Endothelial cell of umbilical vein (primary cell): ENCODE measurements at regions of chr21 and their contacts with region 1.

Region 1: DNA sequence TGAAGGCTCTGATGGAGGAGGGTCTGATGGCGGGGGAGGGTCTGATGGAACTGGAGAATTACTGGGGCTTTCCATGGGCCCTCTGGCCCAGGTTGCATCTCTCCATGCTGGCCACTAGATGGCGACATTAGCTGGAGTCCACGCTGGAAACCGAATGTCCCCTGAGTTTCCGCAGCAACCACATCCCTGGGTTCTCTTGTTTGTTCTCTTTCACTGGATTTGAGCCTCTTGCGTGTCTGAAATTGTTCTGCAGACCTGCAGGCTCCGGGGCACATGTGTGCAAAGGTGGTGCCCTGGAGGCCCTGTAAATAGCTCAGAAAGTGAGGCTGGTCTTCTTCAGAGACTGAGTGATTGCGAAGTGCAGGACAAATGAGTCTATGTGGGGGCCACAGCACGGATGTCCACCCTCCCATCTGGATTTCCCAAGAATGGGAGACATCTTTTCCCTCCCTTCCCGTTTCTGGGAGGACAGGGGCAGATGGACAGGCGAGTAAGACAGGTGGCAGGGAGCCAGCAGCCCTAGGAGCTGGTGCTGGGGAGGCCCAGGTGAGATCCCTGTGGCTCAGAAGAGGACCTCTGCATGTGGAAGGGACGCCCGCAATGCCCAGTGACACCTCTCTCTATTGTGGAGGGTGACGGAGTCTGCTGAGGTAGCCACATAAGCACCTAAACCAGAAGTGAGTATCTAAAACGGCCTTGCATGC is 73.2 kb upstream of the ABCG1 start:
- DNase-seq: peak; percentile 42
- H3K4me3 ChIP-seq: no peak overlapping the region
- H3K27ac ChIP-seq: no peak overlapping the region
- H3K4me1 ChIP-seq: no peaks in the 10 kb centered on the region
- H3K27me3 ChIP-seq: peaks cover 0 to 2% of the 10 kb centered on the region in 2 experiments
- CTCF ChIP-seq: peak; percentile 83 to 92
- POLR2A ChIP-seq: no peak

Region 2: GRCh38 chr21:42220138-42220701 is 74.5 kb after region 1 on chr21:
- CTCF ChIA-PET with region 1: interaction called, 12 read pairs
- POLR2A ChIA-PET with region 1: no interaction called
- dilution Hi-C with region 1: no loop called
- intact Hi-C with region 1: no loop called
- DNase-seq: peak; percentile 91
- H3K4me3 ChIP-seq: peak overlapping the region; percentile 53 to 65 (median 63)
- H3K27ac ChIP-seq: peak overlapping the region; percentile 53
- H3K4me1 ChIP-seq: peaks cover 24% of the 10 kb centered on the region
- H3K27me3 ChIP-seq: peaks cover 2 to 6% of the 10 kb centered on the region in 2 experiments
- CTCF ChIP-seq: no peak
- POLR2A ChIP-seq: no peak

Region 3: DNA sequence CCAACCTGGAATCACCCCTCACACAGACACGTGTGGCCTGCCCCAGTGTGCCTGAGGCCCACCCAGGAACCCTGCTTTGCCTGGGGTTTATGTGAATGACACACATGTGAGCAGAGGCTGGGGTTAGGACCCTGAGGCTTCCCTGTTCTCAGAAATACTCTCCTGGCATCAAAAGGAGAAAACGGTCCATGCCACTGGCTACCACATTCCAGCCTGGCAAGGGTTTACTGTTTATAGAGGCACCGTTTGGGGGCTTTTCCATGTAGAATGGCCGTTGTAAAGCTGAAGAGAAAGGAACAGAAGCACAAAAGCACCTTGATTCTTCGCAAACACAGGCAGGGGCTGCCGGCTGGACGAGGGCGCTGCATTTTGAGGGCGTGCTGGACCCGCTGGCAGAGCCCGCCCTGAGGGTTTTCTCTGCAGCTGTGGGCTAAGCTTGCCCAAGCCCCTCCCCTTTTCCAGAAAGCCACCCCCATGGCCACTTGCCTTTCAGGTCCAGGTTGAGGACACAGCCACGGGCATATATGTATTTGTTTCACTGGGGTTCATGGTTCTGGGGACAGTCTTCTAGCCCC is 156.4 kb after region 1 on chr21:
- CTCF ChIA-PET with region 1: interaction called, 10 read pairs
- POLR2A ChIA-PET with region 1: no interaction called
- dilution Hi-C with region 1: no loop called
- intact Hi-C with region 1: loop called (anchors 1 kb)
- DNase-seq: no peak
- H3K4me3 ChIP-seq: no peak overlapping the region
- H3K27ac ChIP-seq: no peak overlapping the region
- H3K4me1 ChIP-seq: peaks cover 10% of the 10 kb centered on the region
- H3K27me3 ChIP-seq: no peaks in the 10 kb centered on the region
- CTCF ChIP-seq: no peak
- POLR2A ChIP-seq: no peak

Region 4: DNA sequence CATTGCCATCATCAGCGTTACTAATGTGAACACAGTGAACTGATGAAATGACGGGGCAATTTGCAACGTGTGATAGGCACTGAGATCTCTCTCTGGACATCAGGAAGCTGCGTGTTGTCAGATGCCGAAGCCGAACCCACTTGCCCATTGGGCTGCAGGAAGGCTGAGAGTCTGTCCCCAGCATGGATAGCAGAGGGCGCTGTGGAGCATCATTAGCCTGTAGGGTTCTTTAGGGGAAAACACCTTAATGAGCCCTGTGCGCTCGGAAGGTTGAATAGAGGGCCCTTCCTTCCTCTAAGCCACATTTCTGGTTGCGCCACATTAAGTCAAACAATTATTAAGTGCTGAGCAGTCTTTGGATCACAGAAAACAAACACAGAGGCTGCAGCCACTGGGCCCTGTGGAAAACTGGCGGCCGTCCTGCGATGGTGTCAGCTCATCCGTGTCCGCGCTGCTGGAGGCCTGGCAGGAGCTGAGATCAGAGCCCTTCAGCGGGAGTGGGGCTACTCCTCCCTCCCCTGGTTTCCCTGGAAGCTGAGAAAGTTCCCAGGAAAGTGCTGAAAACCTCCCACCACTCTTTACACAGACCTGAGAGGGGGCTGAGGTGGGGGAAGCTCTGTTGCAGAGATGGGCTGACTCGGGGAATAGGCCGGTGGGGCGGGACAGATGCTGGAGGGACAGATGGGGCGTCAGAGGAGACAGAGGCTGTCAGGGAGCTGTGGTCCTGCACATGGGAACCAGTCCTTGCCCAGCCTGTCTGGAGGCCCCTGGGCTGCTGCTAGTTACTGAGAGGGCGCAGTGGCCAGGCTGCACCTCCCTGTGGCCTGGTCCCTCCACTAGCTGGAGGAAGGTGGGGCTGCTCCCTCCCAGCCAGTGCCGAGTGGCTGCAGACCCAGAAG is 192.4 kb after region 1 on chr21:
- CTCF ChIA-PET with region 1: interaction called, 3 read pairs
- POLR2A ChIA-PET with region 1: no interaction called
- dilution Hi-C with region 1: no loop called
- intact Hi-C with region 1: loop called (anchors 10 kb)
- DNase-seq: peak; percentile 53
- H3K4me3 ChIP-seq: no peak overlapping the region
- H3K27ac ChIP-seq: no peak overlapping the region
- H3K4me1 ChIP-seq: no peaks in the 10 kb centered on the region
- H3K27me3 ChIP-seq: peaks cover 10 to 32% of the 10 kb centered on the region in 2 experiments
- CTCF ChIP-seq: peak; percentile 59 to 62
- POLR2A ChIP-seq: no peak

Region 5: DNA sequence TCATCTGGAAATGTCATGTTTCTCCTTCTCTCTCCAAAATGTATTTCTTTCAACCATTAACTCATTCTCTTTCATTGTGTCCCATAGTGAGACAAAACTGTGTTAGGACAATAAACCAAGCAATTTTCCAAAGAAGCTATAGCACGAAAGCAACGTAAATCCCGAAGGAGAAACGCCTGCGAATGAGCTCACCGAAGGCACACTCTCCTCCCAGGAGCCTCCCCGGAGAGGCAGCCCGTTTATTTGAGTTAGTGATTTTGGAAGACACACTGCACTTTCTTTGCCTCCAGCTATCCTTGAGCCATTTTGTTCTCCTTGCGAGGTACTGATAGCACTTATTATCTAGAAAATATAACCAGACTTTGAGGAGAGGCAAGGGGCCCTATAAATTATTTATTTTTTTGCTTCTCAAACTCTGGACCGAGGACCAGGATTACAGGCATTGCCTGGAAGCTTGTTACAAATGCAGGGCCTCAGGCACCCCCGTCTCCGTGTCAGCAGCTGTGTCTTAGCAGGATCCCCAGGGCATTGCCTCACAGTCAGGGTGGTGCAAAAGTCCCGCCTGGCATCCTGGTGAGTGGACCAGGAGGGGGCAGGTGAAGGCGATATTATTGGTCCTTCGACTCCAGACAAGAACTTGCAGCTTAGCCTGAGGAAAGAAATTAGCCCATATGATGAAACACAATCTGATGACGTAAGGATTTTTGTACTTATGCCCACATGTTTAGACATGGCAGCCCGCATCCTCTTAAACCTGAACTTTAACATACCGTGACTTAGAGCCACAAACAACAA is 309.3 kb after region 1 on chr21:
- CTCF ChIA-PET with region 1: no interaction called
- POLR2A ChIA-PET with region 1: no interaction called
- dilution Hi-C with region 1: no loop called
- intact Hi-C with region 1: loop called (anchors 1 kb)
- DNase-seq: no peak
- H3K4me3 ChIP-seq: no peak overlapping the region
- H3K27ac ChIP-seq: no peak overlapping the region
- H3K4me1 ChIP-seq: no peaks in the 10 kb centered on the region
- H3K27me3 ChIP-seq: peaks cover 2 to 5% of the 10 kb centered on the region in 2 experiments
- CTCF ChIP-seq: no peak
- POLR2A ChIP-seq: no peak